ENCODE measurements at regions of chr5 and their contacts with region 1.

Region 1: GRCh38 chr5:135944967-135945560 is 9.7 kb downstream of the LECT2 start:
- DNase-seq: no peak
- ATAC-seq: peak in 3 of 4 donors; percentile 56 to 73 (median 64)
- H3K4me3 ChIP-seq: no peak overlapping the region
- H3K27ac ChIP-seq: no peak overlapping the region
- H3K4me1 ChIP-seq: no peaks in the 10 kb centered on the region
- H3K27me3 ChIP-seq: no peaks in the 10 kb centered on the region
- CTCF ChIP-seq: peak; percentile 74

Region 2: GRCh38 chr5:135880278-135880677 is 64.8 kb before region 1 on chr5:
- intact Hi-C with region 1: no loop called
- DNase-seq: no peak
- ATAC-seq: no peak
- H3K4me3 ChIP-seq: no peak overlapping the region
- H3K27ac ChIP-seq: no peak overlapping the region
- H3K4me1 ChIP-seq: peaks cover 17% of the 10 kb centered on the region
- H3K27me3 ChIP-seq: peaks cover 0 to 2% (median 0%) of the 10 kb centered on the region in 3 donors
- CTCF ChIP-seq: no peak

Region 3: DNA sequence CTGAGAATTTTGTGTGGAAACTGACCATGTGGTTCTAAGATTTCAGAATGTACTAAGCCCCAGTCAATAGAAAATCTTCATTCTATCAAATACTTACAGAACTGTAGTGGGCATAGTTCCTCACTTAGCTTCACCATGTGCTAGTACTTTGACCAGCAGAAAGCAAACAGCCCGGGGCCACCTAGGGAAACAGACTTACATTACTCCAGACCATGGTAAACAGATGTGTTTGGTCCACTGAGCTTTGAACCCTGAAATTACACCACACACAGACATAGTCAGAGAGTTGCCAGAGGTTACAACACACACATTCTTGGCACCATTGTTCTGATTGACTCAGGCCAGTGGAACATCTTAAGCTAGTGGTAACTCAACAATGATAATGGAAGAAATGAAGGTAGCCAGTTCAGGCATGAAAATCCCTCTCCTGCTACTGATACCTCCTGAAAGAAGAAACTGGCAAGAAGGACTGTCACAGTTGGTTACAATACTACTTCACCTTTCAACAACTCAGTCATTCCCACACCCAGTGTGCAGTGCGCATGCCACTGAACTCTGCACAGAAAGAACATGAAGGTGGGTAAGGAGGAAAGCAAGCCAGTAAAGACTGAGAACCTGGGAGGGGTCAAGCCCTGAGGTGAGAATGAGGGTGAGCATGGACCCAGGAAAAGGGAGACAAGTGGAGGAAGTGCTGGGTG is 28.4 kb after region 1 on chr5:
- intact Hi-C with region 1: no loop called
- DNase-seq: peak in 1 of 2 donors; percentile 62
- ATAC-seq: peak; percentile 28 to 85 (median 77)
- H3K4me3 ChIP-seq: no peak overlapping the region
- H3K27ac ChIP-seq: no peak overlapping the region
- H3K4me1 ChIP-seq: no peaks in the 10 kb centered on the region
- H3K27me3 ChIP-seq: peaks cover 0 to 7% (median 0%) of the 10 kb centered on the region in 3 donors
- CTCF ChIP-seq: no peak

Region 4: GRCh38 chr5:136020383-136021015 is 75.4 kb after region 1 on chr5:
- intact Hi-C with region 1: no loop called
- DNase-seq: no peak
- ATAC-seq: peak; percentile 48 to 64 (median 59)
- H3K4me3 ChIP-seq: no peak overlapping the region
- H3K27ac ChIP-seq: peak overlapping the region; percentile 52
- H3K4me1 ChIP-seq: peaks cover 17% of the 10 kb centered on the region
- H3K27me3 ChIP-seq: no peaks in the 10 kb centered on the region
- CTCF ChIP-seq: no peak

Region 5: GRCh38 chr5:136062366-136063274 is 117.6 kb after region 1 on chr5:
- intact Hi-C with region 1: loop called (anchors 2 to 5 kb)
- DNase-seq: no peak
- ATAC-seq: peak; percentile 41 to 63 (median 54)
- H3K4me3 ChIP-seq: no peak overlapping the region
- H3K27ac ChIP-seq: no peak overlapping the region
- H3K4me1 ChIP-seq: no peaks in the 10 kb centered on the region
- H3K27me3 ChIP-seq: no peaks in the 10 kb centered on the region
- CTCF ChIP-seq: peak; percentile 60

Region 6: DNA sequence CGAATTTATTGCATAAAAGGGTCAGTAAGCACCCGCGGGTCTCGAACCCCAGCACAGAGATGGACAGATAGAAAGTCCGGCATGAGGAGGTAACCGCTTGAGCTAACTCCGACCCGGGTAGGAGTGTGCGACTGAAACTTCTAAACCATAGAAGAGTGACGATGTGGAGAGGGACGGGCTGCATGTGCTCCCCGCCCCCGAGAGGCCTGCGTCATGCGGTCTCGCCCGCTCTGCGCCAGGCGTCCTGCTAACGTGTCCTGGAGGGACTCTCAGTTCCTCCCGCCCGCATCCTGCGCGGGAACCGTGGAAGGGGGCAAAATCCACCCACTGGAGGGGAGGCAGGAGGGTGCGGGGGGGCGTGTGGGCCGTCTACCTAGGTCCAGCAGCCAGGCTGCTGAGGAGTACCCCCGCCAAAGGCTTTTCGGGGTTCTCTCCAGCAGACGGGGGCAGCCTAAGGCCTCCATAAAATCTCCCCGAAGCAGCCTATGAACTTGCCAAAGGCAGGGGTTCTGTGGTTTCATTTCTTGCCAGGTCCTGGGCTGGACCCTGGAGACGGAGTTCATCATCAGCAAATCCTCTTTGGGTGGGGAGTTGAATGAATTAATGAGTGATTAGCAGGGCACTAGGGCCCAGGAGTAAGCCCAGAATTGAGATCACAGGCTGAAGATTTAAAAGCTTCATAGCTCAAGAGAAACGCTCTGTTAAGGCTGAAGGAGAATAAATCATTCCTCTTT is 135.6 kb after region 1 on chr5:
- intact Hi-C with region 1: loop called (anchors 1 to 5 kb)
- DNase-seq: peak; percentile 85 to 94
- ATAC-seq: peak; percentile 63 to 94 (median 74)
- H3K4me3 ChIP-seq: peak overlapping the region; percentile 31
- H3K27ac ChIP-seq: peak overlapping the region; percentile 39
- H3K4me1 ChIP-seq: peaks cover 5% of the 10 kb centered on the region
- H3K27me3 ChIP-seq: no peaks in the 10 kb centered on the region
- CTCF ChIP-seq: no peak

Region 7: DNA sequence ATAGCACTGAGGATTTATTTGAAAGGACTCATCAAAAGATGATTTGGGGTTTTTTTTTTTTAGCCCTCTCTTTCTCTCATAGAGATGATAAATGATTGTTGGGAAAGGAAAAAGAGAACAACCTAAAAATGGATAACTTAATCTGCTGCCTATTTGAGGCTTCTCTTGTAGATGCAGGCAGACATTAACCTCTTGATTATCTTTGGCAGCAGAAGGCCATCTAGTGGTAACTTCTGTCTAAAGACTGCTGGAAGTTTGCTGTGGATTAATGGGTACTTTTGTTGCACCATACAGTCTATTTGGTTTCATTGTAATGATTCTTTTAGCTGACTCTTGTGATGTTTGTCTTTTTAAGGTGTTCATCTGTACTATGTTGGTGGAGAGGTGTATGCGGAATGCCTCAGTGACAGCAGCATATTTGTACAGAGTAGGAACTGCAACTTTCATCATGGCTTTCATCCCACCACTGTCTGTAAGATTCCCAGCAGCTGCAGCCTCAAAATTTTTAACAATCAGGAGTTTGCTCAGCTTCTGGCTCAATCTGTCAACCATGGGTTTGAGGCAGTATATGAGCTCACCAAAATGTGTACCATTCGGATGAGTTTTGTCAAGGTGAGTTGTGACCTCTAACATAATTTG is 229.1 kb after region 1 on chr5:
- intact Hi-C with region 1: loop called in 1 of 2 experiments (anchors 5 kb)
- DNase-seq: no peak
- ATAC-seq: peak in 3 of 4 donors; percentile 22 to 81 (median 72)
- H3K4me3 ChIP-seq: no peak overlapping the region
- H3K27ac ChIP-seq: no peak overlapping the region
- H3K4me1 ChIP-seq: no peaks in the 10 kb centered on the region
- H3K27me3 ChIP-seq: no peaks in the 10 kb centered on the region
- CTCF ChIP-seq: peak; percentile 55

Region 8: DNA sequence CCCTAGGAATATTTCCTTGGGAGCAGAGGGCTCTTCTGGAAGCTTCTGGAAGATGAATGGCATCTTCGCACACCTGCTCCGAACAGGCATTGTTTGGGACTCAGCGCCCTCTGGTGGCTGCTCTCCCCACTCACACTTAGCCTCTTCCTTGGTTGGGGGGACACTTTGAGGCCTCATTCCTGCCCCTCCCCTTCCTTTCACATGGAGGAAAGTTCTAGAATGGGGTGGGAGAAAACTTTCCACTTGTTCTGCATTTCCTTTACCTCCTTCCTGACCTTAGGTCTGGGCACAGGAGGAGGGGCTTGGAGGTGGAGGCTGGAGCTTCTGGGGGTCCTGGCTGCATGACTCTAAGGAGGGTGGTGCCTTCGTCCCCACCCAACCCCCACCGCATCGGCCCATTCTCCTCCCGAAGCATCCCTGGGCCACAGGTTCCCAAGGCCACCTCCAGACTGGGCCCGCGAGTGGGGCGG is 267.2 kb after region 1 on chr5:
- intact Hi-C with region 1: loop called (anchors 5 kb)
- DNase-seq: peak; percentile 44 to 80
- ATAC-seq: peak; percentile 67 to 76 (median 71)
- H3K4me3 ChIP-seq: no peak overlapping the region
- H3K27ac ChIP-seq: no peak overlapping the region
- H3K4me1 ChIP-seq: no peaks in the 10 kb centered on the region
- H3K27me3 ChIP-seq: peaks cover 0 to 6% (median 2%) of the 10 kb centered on the region in 3 donors
- CTCF ChIP-seq: peak; percentile 84

Measured in psoas muscle (tissue), 8 donors.